Activated CD4-positive, alpha-beta T cell treated with anti-CD3 and anti-CD28 coated beads, Interleukin-2, amount 10 ng/mL, durations not matched to agents 24 days and 14 days (primary cell): ENCODE measurements at regions of chr3 and their contacts with region 1.

Region 1: DNA sequence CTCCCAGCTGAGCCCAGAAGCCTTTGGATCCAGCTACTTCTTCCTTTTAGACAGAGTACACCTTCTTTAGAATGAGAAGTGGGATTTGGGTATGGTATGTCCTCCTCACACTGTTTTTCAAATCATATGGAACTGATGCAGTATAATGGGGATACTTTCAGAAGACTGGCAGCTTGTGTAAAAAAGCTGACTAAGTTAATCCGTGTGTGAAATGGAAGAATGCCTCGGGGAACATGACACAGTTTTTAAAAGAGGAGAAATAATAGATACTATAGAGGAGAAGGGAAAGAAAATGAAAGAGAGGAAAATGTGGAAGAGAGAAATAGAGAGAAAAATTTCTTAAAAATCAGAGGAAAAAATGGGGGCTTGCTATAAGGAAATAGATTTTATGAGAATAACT is 47.7 kb downstream of the TUSC7 start:
- DNase-seq: no peak
- H3K4me3 Mint-ChIP-seq: no peak overlapping the region
- H3K27ac Mint-ChIP-seq: no peak overlapping the region
- H3K4me1 Mint-ChIP-seq: no peaks in the 10 kb centered on the region
- H3K27me3 Mint-ChIP-seq: no peaks in the 10 kb centered on the region

Region 2: GRCh38 chr3:116140100-116140689 is 617.1 kb before region 1 on chr3:
- intact Hi-C with region 1: loop called (anchors 1 kb)
- DNase-seq: no peak
- H3K4me3 Mint-ChIP-seq: no peak overlapping the region
- H3K27ac Mint-ChIP-seq: no peak overlapping the region
- H3K4me1 Mint-ChIP-seq: no peaks in the 10 kb centered on the region
- H3K27me3 Mint-ChIP-seq: no peaks in the 10 kb centered on the region